ENCODE measurements at regions of chr7 and their contacts with region 1.

Region 1: DNA sequence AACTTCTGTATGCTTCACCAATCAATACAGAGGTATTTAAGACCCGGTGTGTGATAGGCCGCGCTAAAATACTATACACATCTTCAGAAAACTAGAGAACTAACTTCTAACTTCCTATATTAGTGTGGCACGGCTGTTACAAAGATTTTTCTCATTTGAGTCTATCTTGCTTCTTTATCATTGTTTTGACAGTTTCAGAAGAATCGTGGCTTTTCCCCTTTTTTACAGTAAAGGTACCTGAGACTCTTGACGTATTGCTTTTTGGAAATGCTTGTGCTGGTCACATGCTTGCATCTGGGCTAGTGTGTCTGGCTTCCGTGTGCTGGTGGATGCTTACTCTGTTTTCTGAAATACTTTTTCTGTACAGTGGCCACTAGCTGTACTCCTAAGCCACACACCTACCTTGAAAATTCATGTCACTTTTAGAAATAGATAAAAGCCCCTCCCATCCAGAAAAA is 12.7 kb downstream of the IKZF1 start:
- DNase-seq: no peak
- ATAC-seq: peak; percentile 82
- H3K4me3 ChIP-seq: no peak overlapping the region
- H3K27ac ChIP-seq: peak overlapping the region; percentile 66; the same call in 1 of the 2 replicates
- H3K4me1 ChIP-seq: peaks cover 47% of the 10 kb centered on the region
- H3K27me3 ChIP-seq: no peaks in the 10 kb centered on the region
- CTCF ChIP-seq: no peak; a peak in 1 of 6 replicates
- EP300 ChIP-seq: no peak
- POLR2A ChIP-seq: no peak
- RAD21 ChIP-seq: no peak

Region 2: DNA sequence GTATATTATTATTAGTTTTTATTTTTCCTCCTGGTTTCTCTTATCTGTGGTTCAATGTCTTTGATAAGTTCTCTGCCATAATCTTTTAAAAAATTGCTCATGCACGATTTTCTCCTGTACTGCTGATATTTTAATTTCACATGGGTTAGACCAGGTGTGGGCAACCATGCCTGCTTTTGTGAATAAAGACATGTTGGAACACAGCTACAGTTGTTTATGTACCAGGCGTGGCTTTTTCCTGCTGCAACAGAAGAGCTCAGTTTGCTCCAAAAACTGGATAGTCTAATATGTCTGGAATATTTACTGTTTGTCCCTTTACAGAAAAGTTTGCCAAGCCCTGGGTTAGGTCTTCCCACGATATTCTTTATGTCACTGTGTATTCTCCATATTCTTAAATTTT is 438.6 kb before region 1 on chr7:
- CTCF ChIA-PET with region 1: no interaction called
- POLR2A ChIA-PET with region 1: no interaction called
- RAD21 ChIA-PET with region 1: no interaction called
- SMC1A ChIA-PET with region 1: no interaction called
- in situ Hi-C with region 1: no loop called
- intact Hi-C with region 1: no loop called
- DNase-seq: no peak
- ATAC-seq: no peak
- H3K4me3 ChIP-seq: no peak overlapping the region
- H3K27ac ChIP-seq: no peak overlapping the region
- H3K4me1 ChIP-seq: no peaks in the 10 kb centered on the region
- H3K27me3 ChIP-seq: no peaks in the 10 kb centered on the region
- CTCF ChIP-seq: no peak
- EP300 ChIP-seq: no peak
- POLR2A ChIP-seq: no peak
- RAD21 ChIP-seq: no peak

Region 3: GRCh38 chr7:50147951-50148808 is 169.1 kb before region 1 on chr7:
- CTCF ChIA-PET with region 1: interaction called, 4 read pairs
- POLR2A ChIA-PET with region 1: interaction called, 4 read pairs
- RAD21 ChIA-PET with region 1: interaction called, 14 read pairs
- SMC1A ChIA-PET with region 1: interaction called, 25 read pairs
- in situ Hi-C with region 1: no loop called
- intact Hi-C with region 1: no loop called
- DNase-seq: peak; percentile 76
- ATAC-seq: peak; percentile 70
- H3K4me3 ChIP-seq: no peak overlapping the region
- H3K27ac ChIP-seq: peak overlapping the region; percentile 59
- H3K4me1 ChIP-seq: peaks cover 46% of the 10 kb centered on the region
- H3K27me3 ChIP-seq: no peaks in the 10 kb centered on the region
- CTCF ChIP-seq: no peak
- EP300 ChIP-seq: peak; percentile 52 to 85; a peak in 3 of 4 replicates
- POLR2A ChIP-seq: no peak
- RAD21 ChIP-seq: no peak

Region 4: DNA sequence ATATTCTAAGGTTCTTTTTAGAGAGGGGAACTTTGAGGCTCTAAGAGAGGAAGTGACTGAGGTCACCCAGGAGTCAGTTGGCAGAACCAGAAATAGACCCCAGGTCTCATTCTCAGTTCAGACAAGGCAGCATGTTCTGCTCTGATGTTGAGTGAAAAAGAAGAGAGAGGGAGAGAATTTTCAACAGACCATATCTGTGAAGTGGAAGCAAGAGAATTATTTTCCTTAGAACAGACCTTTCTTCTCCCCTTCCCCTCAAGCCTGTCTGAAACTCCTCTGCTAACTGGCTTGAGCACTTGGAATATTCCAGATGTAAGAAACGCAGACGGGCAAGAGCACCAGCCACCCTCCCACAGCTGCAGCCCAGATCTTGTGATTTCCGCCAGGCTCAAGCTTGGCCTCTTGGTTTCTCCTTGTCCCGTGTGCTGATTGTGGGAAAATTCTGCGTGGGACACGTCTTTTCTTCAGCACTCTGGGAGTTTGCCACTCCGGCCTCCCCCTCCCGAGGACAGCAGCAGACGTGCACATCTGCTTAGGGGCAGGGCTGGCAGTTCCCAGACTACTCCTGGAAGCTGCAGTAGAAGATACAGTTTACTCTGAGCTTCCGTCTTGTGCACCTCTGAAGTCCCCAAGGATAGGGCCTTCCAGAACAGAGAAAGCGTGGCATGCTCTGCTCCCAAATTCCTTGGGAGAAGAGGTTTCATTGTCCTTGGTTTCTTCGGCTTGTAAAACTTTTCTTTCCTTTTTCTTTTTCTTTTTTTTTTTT is 35.4 kb before region 1 on chr7:
- CTCF ChIA-PET with region 1: interaction called, 250 read pairs
- POLR2A ChIA-PET with region 1: interaction called, 165 read pairs
- RAD21 ChIA-PET with region 1: interaction called, 293 read pairs
- SMC1A ChIA-PET with region 1: interaction called, 356 read pairs
- in situ Hi-C with region 1: no loop called
- intact Hi-C with region 1: no loop called
- DNase-seq: peak; percentile 81
- ATAC-seq: peak; percentile 88
- H3K4me3 ChIP-seq: peak overlapping the region; percentile 69
- H3K27ac ChIP-seq: peak overlapping the region; percentile 82
- H3K4me1 ChIP-seq: peaks cover 49% of the 10 kb centered on the region
- H3K27me3 ChIP-seq: no peaks in the 10 kb centered on the region
- CTCF ChIP-seq: no peak
- EP300 ChIP-seq: peak; percentile 35 to 72; a peak in 1 of 4 replicates
- POLR2A ChIP-seq: peak; percentile 54; the same call in 1 of the 2 replicates
- RAD21 ChIP-seq: peak; percentile 29; the same call in 1 of the 2 replicates

Region 5: GRCh38 chr7:50304158-50304910 is 12.9 kb before region 1 on chr7 and contains the start of gene IKZF1:
- CTCF ChIA-PET with region 1: interaction called, 5 read pairs
- POLR2A ChIA-PET with region 1: interaction called, 9 read pairs
- RAD21 ChIA-PET with region 1: interaction called, 6 read pairs
- SMC1A ChIA-PET with region 1: interaction called, 131 read pairs
- in situ Hi-C with region 1: no loop called
- intact Hi-C with region 1: no loop called
- DNase-seq: no peak
- ATAC-seq: peak; percentile 41
- H3K4me3 ChIP-seq: peak within 1 kb of the TSS; percentile 79
- H3K27ac ChIP-seq: peak within 1 kb of the TSS; percentile 67
- H3K4me1 ChIP-seq: peaks cover 10% of the 10 kb centered on the region
- H3K27me3 ChIP-seq: no peaks in the 10 kb centered on the region
- CTCF ChIP-seq: no peak; a peak in 1 of 6 replicates
- EP300 ChIP-seq: no peak
- POLR2A ChIP-seq: peak; percentile 33
- RAD21 ChIP-seq: no peak
- polyA plus RNA-seq, gene IKZF1: 27.2 to 29.8 TPM

Region 6: DNA sequence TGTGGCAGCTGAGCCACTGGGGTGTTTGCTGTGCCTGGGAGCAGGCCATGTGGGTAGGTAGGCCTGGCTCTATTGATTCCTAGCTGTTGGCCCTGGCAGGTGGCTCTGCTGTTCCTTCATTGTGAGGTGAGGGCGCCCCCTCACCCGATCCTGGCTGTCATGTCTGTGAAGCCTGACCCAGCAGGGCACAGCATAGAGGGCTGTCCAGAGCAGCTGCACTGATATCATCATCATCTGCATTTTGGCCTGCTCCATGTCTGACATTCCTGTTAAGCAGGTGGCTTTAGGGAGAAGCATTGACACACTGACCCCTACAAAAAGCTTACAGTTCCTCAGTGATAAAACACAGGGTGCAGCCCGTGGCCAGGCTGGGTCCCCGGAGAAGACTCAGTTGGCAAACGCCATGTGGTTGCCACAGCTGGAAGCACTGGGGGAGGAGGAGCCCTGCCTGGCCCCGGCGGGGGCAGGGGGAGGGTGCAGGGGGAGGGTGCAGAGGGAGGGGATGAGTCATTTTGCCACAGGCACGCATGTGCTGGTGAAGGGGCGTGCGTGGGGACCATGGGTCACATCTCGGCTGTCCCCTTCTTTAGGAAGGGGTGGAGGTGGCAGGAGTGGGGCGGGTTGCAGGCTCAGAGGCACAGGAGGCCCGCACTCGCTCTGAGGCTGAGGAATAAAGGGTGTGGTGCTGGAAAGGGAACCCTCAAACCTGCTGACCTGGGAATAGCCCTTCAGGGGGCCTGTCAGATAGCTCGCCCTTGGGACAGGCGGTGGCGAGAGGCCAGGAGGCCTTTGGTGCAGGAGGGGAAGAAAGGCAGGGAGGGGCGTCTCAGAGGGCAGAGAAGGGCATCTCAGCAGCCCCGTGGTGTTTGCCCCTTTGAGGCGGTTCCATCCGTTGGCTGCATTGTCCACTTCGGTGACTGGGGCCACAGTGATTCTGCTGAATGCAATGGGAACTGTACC is 18.8 kb after region 1 on chr7:
- CTCF ChIA-PET with region 1: interaction called, 10 read pairs
- POLR2A ChIA-PET with region 1: interaction called, 14 read pairs
- RAD21 ChIA-PET with region 1: interaction called, 45 read pairs
- SMC1A ChIA-PET with region 1: interaction called, 91 read pairs
- in situ Hi-C with region 1: no loop called
- intact Hi-C with region 1: no loop called
- DNase-seq: no peak
- ATAC-seq: peak; percentile 13
- H3K4me3 ChIP-seq: no peak overlapping the region
- H3K27ac ChIP-seq: peak overlapping the region; percentile 75
- H3K4me1 ChIP-seq: peaks cover 75% of the 10 kb centered on the region
- H3K27me3 ChIP-seq: no peaks in the 10 kb centered on the region
- CTCF ChIP-seq: peak; percentile 4 to 30 (median 16); a peak in 3 of 6 replicates
- EP300 ChIP-seq: no peak
- POLR2A ChIP-seq: peak; percentile 45; the same call in 1 of the 2 replicates
- RAD21 ChIP-seq: peak; percentile 32; the same call in 1 of the 2 replicates

Measured in GM12878 (cell line).